GM10248 (cell line): ENCODE measurements at regions of chr13 and their contacts with region 1.

Region 1: GRCh38 chr13:27353166-27353583 is 71.2 kb upstream of the GTF3A start:
- DNase-seq: peak; percentile 91
- CTCF ChIP-seq: no peak

Region 2: GRCh38 chr13:26946684-26947343 is 406.4 kb before region 1 on chr13:
- CTCF ChIA-PET with region 1: interaction called, 29 read pairs
- POLR2A ChIA-PET with region 1: no interaction called
- DNase-seq: peak; percentile 50
- CTCF ChIP-seq: peak; percentile 53

Region 3: DNA sequence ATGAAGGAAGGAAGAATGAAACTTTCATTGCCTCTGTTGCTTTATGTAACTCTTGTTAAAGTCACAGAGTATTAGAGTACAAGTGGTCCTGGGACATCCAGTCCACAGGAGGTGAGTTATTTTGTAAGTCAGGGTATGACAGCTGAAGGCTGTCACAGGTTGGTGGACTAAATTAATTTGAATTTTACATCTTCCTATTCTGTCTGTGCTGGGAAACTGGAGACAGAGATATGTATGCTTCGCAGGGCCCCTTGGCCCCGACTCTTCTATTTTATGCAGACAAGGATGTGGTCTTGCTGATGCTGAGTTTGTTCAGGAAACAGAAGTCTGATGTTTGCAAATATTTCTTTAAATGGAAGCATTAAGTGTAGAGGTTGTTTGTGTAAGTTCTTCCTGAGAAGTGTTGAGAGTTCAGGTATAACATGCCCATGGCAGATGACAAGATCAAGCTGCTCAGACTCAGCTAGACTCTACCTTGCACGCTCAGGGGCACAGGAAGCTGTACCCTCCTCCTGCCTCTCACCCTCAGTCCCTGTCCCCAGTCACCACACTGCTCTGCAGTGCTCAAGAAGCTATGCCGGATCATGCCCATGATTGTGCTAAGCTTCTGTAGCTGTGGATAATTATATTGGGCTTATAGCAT is 59.2 kb before region 1 on chr13:
- CTCF ChIA-PET with region 1: no interaction called
- POLR2A ChIA-PET with region 1: no interaction called
- DNase-seq: no peak
- CTCF ChIP-seq: no peak

Region 4: GRCh38 chr13:27339299-27339698 is 13.9 kb before region 1 on chr13:
- CTCF ChIA-PET with region 1: interaction called, 192 read pairs
- POLR2A ChIA-PET with region 1: no interaction called
- DNase-seq: peak; percentile 62
- CTCF ChIP-seq: peak; percentile 68

Region 5: GRCh38 chr13:27374650-27375049 is 21.5 kb after region 1 on chr13:
- CTCF ChIA-PET with region 1: no interaction called
- POLR2A ChIA-PET with region 1: no interaction called
- DNase-seq: peak; percentile 75
- CTCF ChIP-seq: peak; percentile 71